WTC11 (cell line): ENCODE measurements at regions of chr6 and their contacts with region 1.

Region 1: GRCh38 chr6:157184202-157185020 is 138.9 kb downstream of the TMEM242 start:
- DNase-seq: peak; percentile 85
- ATAC-seq: peak; percentile 95
- H3K4me3 Mint-ChIP-seq: no peak overlapping the region
- H3K27ac Mint-ChIP-seq: peak overlapping the region; percentile 82
- H3K4me1 Mint-ChIP-seq: peaks cover 23% of the 10 kb centered on the region
- H3K27me3 Mint-ChIP-seq: no peaks in the 10 kb centered on the region
- CTCF ChIP-seq: peak; percentile 71

Region 2: DNA sequence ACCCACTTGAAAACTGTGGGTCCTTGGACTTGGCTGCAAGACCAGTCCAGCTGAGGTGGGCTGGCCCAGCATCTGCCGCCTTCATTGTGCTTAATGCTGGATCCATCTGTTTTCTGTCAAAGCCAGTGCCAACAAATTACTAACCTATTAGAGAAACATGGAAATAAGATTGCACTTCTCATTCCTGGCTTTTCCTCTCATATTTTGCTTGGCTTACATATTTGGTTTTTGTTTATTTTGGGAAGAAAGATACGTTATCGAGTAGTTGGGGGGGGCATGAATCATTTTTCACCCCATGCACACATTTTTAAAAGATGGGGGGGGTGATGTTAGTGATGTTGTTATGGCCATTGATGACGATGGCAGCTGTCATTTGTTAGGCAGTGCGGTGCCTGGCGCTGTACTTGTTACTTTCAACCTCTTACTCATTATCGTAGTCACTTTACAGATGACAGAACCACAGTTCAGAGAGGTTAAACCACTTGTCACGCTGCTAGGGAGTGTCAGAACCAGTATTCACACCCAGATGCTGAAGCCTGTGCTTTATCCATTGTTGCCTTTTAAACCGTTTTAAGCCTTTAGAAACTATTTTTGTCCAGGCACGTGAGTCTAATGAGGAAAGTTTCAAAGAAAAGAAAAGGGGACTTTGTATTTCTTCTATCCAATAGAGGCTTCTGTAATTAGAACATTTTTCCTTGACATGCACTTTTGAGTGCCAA is 41.1 kb before region 1 on chr6:
- CTCF ChIA-PET with region 1: interaction called, 13 read pairs
- POLR2A ChIA-PET with region 1: no interaction called
- DNase-seq: no peak
- ATAC-seq: no peak
- H3K4me3 Mint-ChIP-seq: no peak overlapping the region
- H3K27ac Mint-ChIP-seq: 0 out of 2 replicates have a peak overlapping the region, but pooled peaks have one; percentile 20
- H3K4me1 Mint-ChIP-seq: peaks cover 39% of the 10 kb centered on the region
- H3K27me3 Mint-ChIP-seq: no peaks in the 10 kb centered on the region
- CTCF ChIP-seq: no peak

Region 3: GRCh38 chr6:157158897-157159296 is 25.5 kb before region 1 on chr6:
- CTCF ChIA-PET with region 1: interaction called, 21 read pairs
- POLR2A ChIA-PET with region 1: no interaction called
- DNase-seq: no peak
- ATAC-seq: peak; percentile 68
- H3K4me3 Mint-ChIP-seq: no peak overlapping the region
- H3K27ac Mint-ChIP-seq: peak overlapping the region; percentile 69
- H3K4me1 Mint-ChIP-seq: peaks cover 49% of the 10 kb centered on the region
- H3K27me3 Mint-ChIP-seq: no peaks in the 10 kb centered on the region
- CTCF ChIP-seq: no peak

Region 4: DNA sequence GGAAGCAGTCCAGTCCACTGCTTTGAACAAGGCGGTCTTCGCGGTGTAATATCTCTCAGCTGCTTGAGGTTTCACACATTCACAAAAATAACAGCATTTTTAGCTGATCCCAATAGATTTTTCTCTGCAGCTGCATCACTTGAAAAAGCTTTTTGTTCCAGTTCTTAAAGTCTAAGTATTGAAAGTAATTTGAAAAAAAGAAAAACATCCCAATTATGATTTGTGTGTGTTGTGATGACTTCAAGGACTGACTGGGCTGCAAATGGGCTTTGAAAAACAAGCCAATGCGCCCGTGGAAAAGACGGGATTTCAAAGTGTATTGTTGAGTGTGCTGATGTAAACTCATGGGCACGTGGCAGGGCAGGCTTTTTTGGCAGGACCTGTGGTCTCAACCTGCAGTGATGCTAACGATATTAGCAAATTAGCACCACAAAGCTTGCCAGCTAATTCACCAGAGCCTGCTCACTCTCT is 12.1 kb before region 1 on chr6:
- CTCF ChIA-PET with region 1: interaction called, 15 read pairs
- POLR2A ChIA-PET with region 1: no interaction called
- DNase-seq: no peak
- ATAC-seq: peak; percentile 22; the same call in 1 of the 2 replicates
- H3K4me3 Mint-ChIP-seq: no peak overlapping the region
- H3K27ac Mint-ChIP-seq: peak overlapping the region; percentile 69; the same call in 1 of the 2 replicates
- H3K4me1 Mint-ChIP-seq: peaks cover 21% of the 10 kb centered on the region
- H3K27me3 Mint-ChIP-seq: no peaks in the 10 kb centered on the region
- CTCF ChIP-seq: no peak